ENCODE measurements at regions of chr5 and their contacts with region 1.

Region 1: DNA sequence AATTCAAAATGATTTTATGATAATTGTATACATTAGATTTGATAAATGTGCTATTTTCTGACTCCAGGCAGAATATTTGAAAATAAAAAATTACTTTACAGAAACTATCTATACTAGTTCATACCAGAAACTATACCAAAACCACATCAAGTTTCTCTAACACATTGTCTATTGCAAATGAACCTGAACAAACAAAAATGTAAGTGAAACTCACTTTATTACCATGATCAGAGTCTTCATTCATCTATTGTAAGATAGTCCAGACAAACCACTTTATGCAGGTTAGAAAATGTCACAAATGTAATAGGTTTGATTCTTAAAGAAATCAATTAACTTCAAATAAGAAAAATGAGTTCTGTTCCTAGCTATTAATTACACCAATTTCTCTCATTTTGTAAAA is 99.4 kb downstream of the OXCT1 start:
- DNase-seq: no peak
- ATAC-seq: peak; percentile 95
- H3K4me3 ChIP-seq: no peak overlapping the region
- H3K27ac ChIP-seq: peak overlapping the region; percentile 62; the same call in 1 of the 2 replicates
- H3K4me1 ChIP-seq: peaks cover 27% of the 10 kb centered on the region
- H3K27me3 ChIP-seq: no peaks in the 10 kb centered on the region
- CTCF ChIP-seq: no peak
- EP300 ChIP-seq: 0 out of 4 replicates have a peak, but pooled peaks of 1 of the 2 experiments have one; percentile 27
- POLR2A ChIP-seq: no peak
- RAD21 ChIP-seq: no peak

Region 2: GRCh38 chr5:41748631-41749030 is 22.2 kb before region 1 on chr5:
- CTCF ChIA-PET with region 1: interaction called, 7 read pairs
- POLR2A ChIA-PET with region 1: interaction called, 6 read pairs
- RAD21 ChIA-PET with region 1: interaction called, 3 read pairs
- SMC1A ChIA-PET with region 1: interaction called, 104 read pairs
- in situ Hi-C with region 1: no loop called
- intact Hi-C with region 1: loop called (anchors 2 kb)
- DNase-seq: peak; percentile 77
- ATAC-seq: peak; percentile 99
- H3K4me3 ChIP-seq: no peak overlapping the region
- H3K27ac ChIP-seq: no peak overlapping the region; the same call in 1 of the 2 replicates
- H3K4me1 ChIP-seq: peaks cover 10% of the 10 kb centered on the region
- H3K27me3 ChIP-seq: no peaks in the 10 kb centered on the region
- CTCF ChIP-seq: no peak
- EP300 ChIP-seq: peak; percentile 75 to 90
- POLR2A ChIP-seq: no peak
- RAD21 ChIP-seq: no peak